ENCODE measurements at regions of chr2 and their contacts with region 1.

Region 1: DNA sequence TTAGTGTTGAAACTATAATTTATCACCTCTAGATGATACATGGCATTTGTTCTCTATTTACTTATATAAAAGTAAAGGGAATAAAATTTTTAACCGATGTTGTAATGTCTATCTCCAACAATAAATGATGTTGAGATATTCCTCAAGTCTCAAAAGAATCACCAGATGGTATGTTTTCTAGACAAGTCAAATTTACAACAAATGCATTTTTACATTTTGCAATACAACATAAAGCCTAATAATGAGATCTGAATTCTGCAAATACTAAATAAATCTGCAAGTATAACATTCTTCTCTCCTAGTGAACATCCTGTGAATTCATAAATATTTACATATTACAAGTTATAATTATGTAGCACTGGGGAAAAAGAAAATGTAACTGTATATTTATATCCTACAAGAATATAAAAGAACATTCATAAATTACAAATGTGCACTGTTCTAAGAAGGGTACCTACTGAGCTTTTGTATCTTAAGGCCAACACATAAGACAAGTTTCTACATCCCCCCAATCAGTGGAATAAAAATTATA is 1504.4 kb upstream of the ZEB2 start:
- DNase-seq: no peak
- H3K4me3 ChIP-seq: no peak overlapping the region
- H3K27ac ChIP-seq: no peak overlapping the region
- H3K4me1 ChIP-seq: no peaks in the 10 kb centered on the region
- H3K27me3 ChIP-seq: no peaks in the 10 kb centered on the region
- CTCF ChIP-seq: no peak

Region 2: DNA sequence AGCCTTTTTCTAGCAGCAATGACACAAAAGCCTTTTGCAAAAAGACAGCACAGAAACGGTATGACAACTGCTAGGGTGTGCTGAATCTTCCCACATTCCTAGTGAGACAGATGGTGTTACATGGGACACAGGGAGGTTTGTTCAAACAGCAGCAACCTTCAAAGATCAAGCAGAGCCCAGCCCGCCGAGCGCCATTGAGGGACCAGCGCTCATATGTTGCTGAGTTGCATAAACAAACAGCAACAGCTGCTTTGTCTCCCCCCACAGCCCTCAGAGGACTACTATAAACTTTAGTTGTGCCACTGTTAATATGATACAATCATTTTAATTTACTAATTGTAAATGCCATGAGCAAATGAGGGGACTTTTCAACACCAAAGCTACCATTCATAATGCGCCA is 1622.0 kb before region 1 on chr2:
- intact Hi-C with region 1: loop called (anchors 10 kb)
- DNase-seq: no peak
- H3K4me3 ChIP-seq: no peak overlapping the region
- H3K27ac ChIP-seq: no peak overlapping the region
- H3K4me1 ChIP-seq: peaks cover 0 to 45% (median 6%) of the 10 kb centered on the region in 4 donors
- H3K27me3 ChIP-seq: no peaks in the 10 kb centered on the region
- CTCF ChIP-seq: no peak

Region 3: GRCh38 chr2:145760781-145761649 is 263.3 kb before region 1 on chr2:
- intact Hi-C with region 1: no loop called
- DNase-seq: no peak
- H3K4me3 ChIP-seq: no peak overlapping the region
- H3K27ac ChIP-seq: peak overlapping the region in 1 of 2 donors; percentile 3
- H3K4me1 ChIP-seq: peaks cover 0 to 42% (median 9%) of the 10 kb centered on the region in 4 donors
- H3K27me3 ChIP-seq: no peaks in the 10 kb centered on the region
- CTCF ChIP-seq: no peak

Region 4: GRCh38 chr2:145860083-145860482 is 164.2 kb before region 1 on chr2:
- intact Hi-C with region 1: no loop called
- DNase-seq: no peak
- H3K4me3 ChIP-seq: no peak overlapping the region
- H3K27ac ChIP-seq: no peak overlapping the region
- H3K4me1 ChIP-seq: no peaks in the 10 kb centered on the region
- H3K27me3 ChIP-seq: no peaks in the 10 kb centered on the region
- CTCF ChIP-seq: no peak

Region 5: GRCh38 chr2:145987793-145988192 is 36.5 kb before region 1 on chr2:
- intact Hi-C with region 1: no loop called
- DNase-seq: no peak
- H3K4me3 ChIP-seq: no peak overlapping the region
- H3K27ac ChIP-seq: no peak overlapping the region
- H3K4me1 ChIP-seq: peaks cover 0 to 4% (median 0%) of the 10 kb centered on the region in 4 donors
- H3K27me3 ChIP-seq: no peaks in the 10 kb centered on the region
- CTCF ChIP-seq: no peak

Region 6: DNA sequence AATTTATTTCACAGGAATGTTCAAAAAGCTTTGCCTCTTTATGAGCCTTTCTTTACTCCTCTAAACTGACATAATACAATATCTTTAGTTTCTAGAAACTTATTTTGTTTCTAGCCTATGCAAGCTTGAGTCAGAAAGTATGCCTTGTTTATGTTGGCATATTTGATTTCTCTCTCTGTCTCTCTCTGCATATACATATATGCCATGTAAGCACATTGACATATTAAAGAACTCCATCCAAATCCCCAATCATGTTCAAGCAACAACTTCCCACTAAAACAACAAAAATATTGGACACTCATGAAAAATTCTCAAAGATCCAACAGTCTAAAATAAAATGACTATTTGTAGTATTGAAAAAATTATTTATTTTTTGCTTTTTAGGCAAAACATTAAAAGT is 169.3 kb after region 1 on chr2:
- intact Hi-C with region 1: no loop called
- DNase-seq: no peak
- H3K4me3 ChIP-seq: no peak overlapping the region
- H3K27ac ChIP-seq: no peak overlapping the region
- H3K4me1 ChIP-seq: no peaks in the 10 kb centered on the region
- H3K27me3 ChIP-seq: no peaks in the 10 kb centered on the region
- CTCF ChIP-seq: no peak

Measured in tibial artery (tissue), 4 donors.